ENCODE measurements at regions of chr13 and their contacts with region 1.

Region 1: GRCh38 chr13:59750860-59751259 is 412.9 kb downstream of the DIAPH3 start:
- DNase-seq: peak; percentile 93
- H3K4me3 ChIP-seq: peak overlapping the region; percentile 35
- H3K27ac ChIP-seq: peak overlapping the region; percentile 76
- H3K4me1 ChIP-seq: peaks cover 73% of the 10 kb centered on the region
- H3K27me3 ChIP-seq: no peaks in the 10 kb centered on the region
- CTCF ChIP-seq: peak; percentile 29; the same call in 1 of the 2 replicates

Region 2: DNA sequence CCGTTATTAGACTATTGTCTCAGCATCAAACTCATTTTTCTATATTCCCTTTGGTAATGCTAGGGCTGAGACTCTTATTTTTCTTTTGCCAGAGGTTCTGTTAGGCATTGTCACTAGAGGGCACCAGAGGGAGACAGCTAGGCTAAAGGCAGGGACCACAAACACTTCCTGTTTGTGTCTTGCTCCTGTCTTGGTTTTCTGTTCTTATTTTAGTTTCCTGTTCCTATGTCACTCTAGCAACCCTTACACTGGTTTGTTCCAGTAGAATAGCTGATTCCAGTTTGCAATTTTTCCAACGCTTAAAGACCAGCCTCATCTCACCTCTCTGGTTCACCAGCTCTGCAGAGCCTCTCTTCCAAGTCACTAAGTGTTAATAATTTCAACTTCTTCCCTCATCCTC is 359.2 kb before region 1 on chr13:
- CTCF ChIA-PET with region 1: no interaction called
- POLR2A ChIA-PET with region 1: no interaction called
- intact Hi-C with region 1: loop called (anchors 10 kb)
- DNase-seq: peak; percentile 91
- H3K4me3 ChIP-seq: no peak overlapping the region
- H3K27ac ChIP-seq: peak overlapping the region; percentile 58
- H3K4me1 ChIP-seq: peaks cover 23% of the 10 kb centered on the region
- H3K27me3 ChIP-seq: no peaks in the 10 kb centered on the region
- CTCF ChIP-seq: peak; percentile 93

Region 3: GRCh38 chr13:59477011-59477410 is 273.8 kb before region 1 on chr13:
- CTCF ChIA-PET with region 1: no interaction called
- POLR2A ChIA-PET with region 1: no interaction called
- intact Hi-C with region 1: loop called (anchors 10 kb)
- DNase-seq: no peak
- H3K4me3 ChIP-seq: no peak overlapping the region
- H3K27ac ChIP-seq: no peak overlapping the region
- H3K4me1 ChIP-seq: peaks cover 55% of the 10 kb centered on the region
- H3K27me3 ChIP-seq: no peaks in the 10 kb centered on the region
- CTCF ChIP-seq: peak; percentile 56

Region 4: DNA sequence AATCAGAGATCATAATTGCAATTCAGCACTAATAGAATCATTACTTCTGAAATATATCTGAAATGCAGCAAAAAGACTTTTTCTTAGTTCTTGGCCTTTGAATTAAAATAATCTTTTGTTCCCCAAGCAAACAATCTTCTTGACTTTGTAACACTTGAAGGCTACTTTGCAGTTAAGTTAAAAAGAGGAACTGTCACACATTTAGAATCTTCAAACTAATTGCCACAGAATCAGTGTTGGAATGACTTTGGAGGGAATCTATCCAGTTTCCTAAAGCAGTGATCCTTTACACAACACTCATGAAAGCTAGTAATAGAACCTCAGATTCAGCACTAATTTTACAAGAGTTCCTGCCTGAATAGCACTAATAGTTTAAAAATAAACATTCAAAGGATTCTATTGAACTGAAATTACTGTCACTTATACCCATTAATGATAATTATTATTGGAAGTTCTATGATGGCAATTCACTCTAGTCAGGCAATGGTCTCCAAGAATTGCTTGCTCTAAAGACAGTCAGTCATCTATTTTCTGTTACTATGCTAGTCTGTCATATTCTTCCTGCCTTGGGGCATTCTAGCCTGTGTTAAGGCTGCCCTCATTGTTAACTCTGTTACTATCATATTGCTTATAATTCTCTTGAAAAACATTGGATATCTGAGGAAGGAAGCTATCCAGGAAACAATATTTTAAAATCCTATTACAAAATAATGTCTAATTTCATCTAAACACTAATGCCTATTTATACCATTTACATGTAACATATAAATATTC is 50.4 kb after region 1 on chr13:
- CTCF ChIA-PET with region 1: no interaction called
- POLR2A ChIA-PET with region 1: no interaction called
- intact Hi-C with region 1: no loop called
- DNase-seq: peak; percentile 73
- H3K4me3 ChIP-seq: no peak overlapping the region
- H3K27ac ChIP-seq: peak overlapping the region; percentile 11
- H3K4me1 ChIP-seq: peaks cover 17% of the 10 kb centered on the region
- H3K27me3 ChIP-seq: no peaks in the 10 kb centered on the region
- CTCF ChIP-seq: no peak

Region 5: GRCh38 chr13:59906413-59907049 is 155.7 kb after region 1 on chr13:
- CTCF ChIA-PET with region 1: no interaction called
- POLR2A ChIA-PET with region 1: no interaction called
- intact Hi-C with region 1: loop called (anchors 1 kb)
- DNase-seq: peak; percentile 75
- H3K4me3 ChIP-seq: no peak overlapping the region
- H3K27ac ChIP-seq: peak overlapping the region; percentile 64
- H3K4me1 ChIP-seq: peaks cover 32% of the 10 kb centered on the region
- H3K27me3 ChIP-seq: no peaks in the 10 kb centered on the region
- CTCF ChIP-seq: peak; percentile 79